ENCODE measurements at regions of chr6 and their contacts with region 1.

Region 1: GRCh38 chr6:3045369-3045768 is 22.9 kb upstream of the RIPK1 start:
- DNase-seq: peak in 1 of 6 donors; percentile 45
- ATAC-seq: no peak
- H3K4me3 ChIP-seq: no peak overlapping the region
- H3K27ac ChIP-seq: no peak overlapping the region
- H3K4me1 ChIP-seq: no peaks in the 10 kb centered on the region
- H3K27me3 ChIP-seq: no peaks in the 10 kb centered on the region
- CTCF ChIP-seq: no peak

Region 2: GRCh38 chr6:3013479-3013878 is 31.9 kb before region 1 on chr6:
- intact Hi-C with region 1: loop called in 2 of 3 experiments (anchors 5 kb)
- DNase-seq: no peak
- ATAC-seq: peak in 2 of 4 donors; percentile 55 to 61
- H3K4me3 ChIP-seq: no peak overlapping the region
- H3K27ac ChIP-seq: no peak overlapping the region
- H3K4me1 ChIP-seq: no peaks in the 10 kb centered on the region
- H3K27me3 ChIP-seq: no peaks in the 10 kb centered on the region
- CTCF ChIP-seq: no peak

Region 3: DNA sequence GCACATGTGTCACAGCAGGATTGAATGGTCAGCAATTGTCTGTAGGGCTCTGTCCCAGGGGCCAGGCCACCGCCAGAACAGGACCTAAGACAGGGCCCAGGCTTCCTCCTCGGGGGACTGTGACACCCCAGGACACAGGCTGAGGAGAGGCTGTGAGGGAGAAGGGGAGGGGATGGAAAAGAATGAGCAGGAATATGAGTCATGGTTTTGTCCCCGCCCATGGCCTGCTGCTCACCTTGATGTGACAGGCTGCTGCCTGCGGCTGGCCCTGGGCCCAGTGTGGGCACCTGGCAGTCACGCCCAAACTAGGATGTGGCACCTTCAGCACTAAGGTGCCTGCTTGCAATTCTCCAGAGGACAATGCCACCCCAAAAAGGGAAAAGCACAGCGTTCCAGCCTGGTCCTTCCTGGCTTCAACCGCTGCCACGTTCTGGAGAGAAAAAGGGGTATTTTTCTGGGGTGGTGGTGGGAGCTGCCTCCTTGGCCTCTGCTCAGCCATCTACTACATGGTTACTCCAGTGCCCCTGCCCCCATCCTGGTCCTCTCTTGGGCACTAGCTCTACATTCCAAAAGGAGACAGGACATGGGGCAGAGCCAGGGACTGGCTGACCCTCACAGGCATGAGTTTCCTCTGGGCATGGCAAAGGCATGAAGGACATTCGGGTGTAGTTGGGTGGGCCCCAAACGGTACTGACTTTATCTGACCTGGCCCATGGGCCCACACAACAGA is 318.1 kb after region 1 on chr6:
- intact Hi-C with region 1: no loop called
- DNase-seq: peak; percentile 86 to 96 (median 94)
- ATAC-seq: peak; percentile 96 to 98 (median 96)
- H3K4me3 ChIP-seq: no peak overlapping the region
- H3K27ac ChIP-seq: peak overlapping the region; percentile 45 to 88 (median 72)
- H3K4me1 ChIP-seq: peaks cover 12 to 18% (median 13%) of the 10 kb centered on the region in 3 donors
- H3K27me3 ChIP-seq: no peaks in the 10 kb centered on the region
- CTCF ChIP-seq: no peak

Measured in pancreas (tissue), 10 donors.